Activated T-helper 2 cell treated with anti-CD3 and anti-CD28 coated beads, Interferon-gamma antibody, Interleukin-2, Interleukin-4, amounts not matched to agents 10 μg/mL and 5 μg/mL and 100 μg/mL, durations not matched to agents 14 hours and 24 hours and 36 hours (primary cell): ENCODE measurements at regions of chr19 and their contacts with region 1.

Region 1: GRCh38 chr19:18152444-18152816 is 533 bp upstream of the PIK3R2 start:
- DNase-seq: peak; percentile 97
- H3K4me3 Mint-ChIP-seq: peak overlapping the region; percentile 93
- H3K27ac Mint-ChIP-seq: peak overlapping the region; percentile 100
- H3K4me1 Mint-ChIP-seq: peaks cover 22% of the 10 kb centered on the region
- H3K27me3 Mint-ChIP-seq: no peaks in the 10 kb centered on the region

Region 2: GRCh38 chr19:17947815-17948513 is 204.5 kb before region 1 on chr19:
- intact Hi-C with region 1: loop called (anchors 5 kb)
- DNase-seq: peak; percentile 94
- H3K4me3 Mint-ChIP-seq: peak overlapping the region; percentile 75
- H3K27ac Mint-ChIP-seq: no peak overlapping the region
- H3K4me1 Mint-ChIP-seq: peaks cover 32% of the 10 kb centered on the region
- H3K27me3 Mint-ChIP-seq: peaks cover 34% of the 10 kb centered on the region

Region 3: DNA sequence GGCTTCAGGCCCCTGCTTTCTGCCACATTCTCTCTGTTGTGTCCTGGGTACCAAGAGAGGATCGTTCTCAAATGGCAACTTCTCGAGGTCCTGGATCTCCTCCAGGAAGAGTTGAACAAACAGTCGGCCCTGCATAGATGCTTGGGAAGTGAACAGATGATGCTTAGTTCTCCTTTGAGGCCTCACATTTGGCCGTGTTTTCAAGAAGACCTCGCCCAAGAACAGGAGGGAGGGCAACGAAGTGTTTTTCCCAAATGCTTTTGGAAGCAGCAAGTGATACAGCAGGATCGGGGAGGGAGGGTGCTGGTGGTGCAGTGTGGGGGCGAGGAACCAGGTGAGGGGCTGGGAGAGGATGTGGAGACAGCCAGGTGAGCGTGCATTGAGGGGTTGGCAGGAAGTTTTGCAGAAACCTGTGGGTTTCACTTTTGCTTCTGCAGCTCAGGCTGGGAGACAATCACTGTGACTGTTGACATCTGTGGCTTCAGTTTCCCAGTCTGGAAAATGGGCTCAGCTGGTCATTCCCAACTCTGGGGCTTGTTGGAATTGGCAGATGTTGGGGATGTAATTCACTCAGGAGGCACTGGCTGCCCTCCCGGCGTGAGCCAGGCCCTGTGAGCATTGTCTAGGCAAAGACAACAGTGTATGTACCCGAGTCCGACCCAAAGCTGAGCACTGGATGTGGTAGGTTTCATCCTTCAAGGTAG is 33.3 kb before region 1 on chr19:
- intact Hi-C with region 1: loop called (anchors 1 kb)
- DNase-seq: peak; percentile 61
- H3K4me3 Mint-ChIP-seq: peak overlapping the region; percentile 74
- H3K27ac Mint-ChIP-seq: peak overlapping the region; percentile 85
- H3K4me1 Mint-ChIP-seq: peaks cover 23% of the 10 kb centered on the region
- H3K27me3 Mint-ChIP-seq: no peaks in the 10 kb centered on the region

Region 4: GRCh38 chr19:18224525-18225354 is 72.3 kb after region 1 on chr19:
- intact Hi-C with region 1: no loop called
- DNase-seq: peak; percentile 85
- H3K4me3 Mint-ChIP-seq: peak overlapping the region; percentile 79
- H3K27ac Mint-ChIP-seq: no peak overlapping the region
- H3K4me1 Mint-ChIP-seq: peaks cover 8% of the 10 kb centered on the region
- H3K27me3 Mint-ChIP-seq: peaks cover 47% of the 10 kb centered on the region